Right ventricle myocardium inferior (tissue), 1 donor: ENCODE measurements at regions of chr1 and their contacts with region 1.

Region 1: GRCh38 chr1:67685067-67685557 is at the start of gene GADD45A:
- DNase-seq: peak; percentile 99
- ATAC-seq: peak; percentile 95
- total RNA-seq, gene GADD45A: 53.8 TPM

Region 2: DNA sequence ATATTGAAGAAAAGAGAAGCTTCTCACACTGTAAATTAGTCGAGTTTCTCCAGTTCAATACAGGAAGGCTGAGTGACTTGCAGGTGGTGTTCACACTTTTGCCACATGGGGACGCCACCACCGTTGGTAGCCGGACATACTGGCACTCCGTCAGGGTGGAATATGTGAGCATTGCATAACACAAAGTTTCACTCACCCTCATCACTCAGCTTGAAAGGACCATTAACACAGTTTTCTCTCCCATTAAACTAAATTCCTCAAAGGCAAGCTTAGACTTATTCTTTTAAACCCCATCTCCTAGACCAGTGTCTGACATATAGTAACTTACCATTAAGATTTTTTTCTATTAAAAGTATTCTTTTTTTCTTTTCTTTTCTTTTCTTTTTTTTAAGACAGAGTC is 149.6 kb before region 1 on chr1:
- intact Hi-C with region 1: loop called (anchors 5 kb)
- DNase-seq: peak; percentile 74
- ATAC-seq: peak; percentile 69

Region 3: DNA sequence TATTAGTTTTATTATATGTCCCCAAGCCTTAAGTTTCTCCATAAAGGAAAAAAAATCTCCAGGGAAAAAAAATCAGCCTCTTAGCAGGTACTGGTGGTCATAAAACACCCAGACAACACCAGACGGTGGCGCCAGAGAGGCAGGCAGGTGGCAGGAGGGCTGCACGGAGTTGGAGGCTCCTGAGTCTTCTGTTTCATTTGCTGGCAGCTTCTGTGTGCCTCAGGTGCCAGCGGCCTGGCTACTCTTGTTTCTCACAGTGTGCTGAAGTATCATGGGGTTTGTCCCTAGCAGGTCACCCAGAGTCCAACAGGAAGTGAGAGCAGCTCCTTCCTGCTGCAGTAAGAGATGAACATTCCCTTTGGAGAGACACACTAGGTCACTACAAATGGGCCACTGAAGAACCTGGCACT is 123.4 kb before region 1 on chr1:
- intact Hi-C with region 1: loop called (anchors 1 kb)
- DNase-seq: peak; percentile 94
- ATAC-seq: peak; percentile 93

Region 4: DNA sequence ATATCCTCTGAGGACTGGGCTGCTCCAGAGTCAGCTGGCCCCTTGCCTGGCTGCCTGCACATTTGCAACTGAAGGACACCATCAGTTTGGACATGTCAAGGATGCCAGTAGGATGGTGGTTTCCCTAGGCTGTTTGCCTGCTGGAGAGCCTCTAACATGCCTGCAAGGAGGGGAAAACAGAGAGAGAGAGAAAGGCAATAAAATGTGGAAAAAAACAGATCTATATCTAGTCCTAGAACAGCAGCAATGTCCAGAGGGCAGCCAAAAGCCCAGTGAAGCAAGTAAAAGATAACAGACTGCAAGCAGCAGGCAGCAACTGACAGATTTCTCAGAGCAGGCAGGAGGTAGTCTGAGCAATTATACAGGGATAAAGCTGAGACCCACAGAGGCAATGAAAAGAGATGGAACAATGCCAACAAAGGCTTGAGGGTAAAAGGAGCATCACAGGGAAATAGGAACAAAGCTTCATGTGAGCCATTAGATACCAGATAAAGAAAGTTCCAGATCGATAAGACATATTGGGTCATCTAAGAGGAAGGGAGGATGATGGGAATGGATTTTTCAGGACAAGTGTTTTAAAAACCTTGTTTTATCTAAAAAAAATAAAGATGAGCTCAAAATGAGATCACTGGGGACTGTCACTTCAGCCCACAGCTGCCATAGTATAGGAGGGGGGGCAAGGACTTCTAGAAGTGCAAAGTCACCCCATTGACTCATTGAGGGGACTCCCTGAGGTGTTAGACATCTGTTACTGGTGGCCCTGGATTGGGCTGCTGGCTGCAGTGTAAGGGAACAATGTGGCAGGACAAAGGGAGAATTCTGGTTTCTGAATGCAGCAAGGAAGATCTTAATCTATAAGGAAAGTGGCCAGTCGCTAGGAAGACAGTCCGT is 38.7 kb before region 1 on chr1:
- intact Hi-C with region 1: loop called (anchors 5 kb)
- DNase-seq: peak; percentile 73
- ATAC-seq: peak; percentile 52

Region 5: DNA sequence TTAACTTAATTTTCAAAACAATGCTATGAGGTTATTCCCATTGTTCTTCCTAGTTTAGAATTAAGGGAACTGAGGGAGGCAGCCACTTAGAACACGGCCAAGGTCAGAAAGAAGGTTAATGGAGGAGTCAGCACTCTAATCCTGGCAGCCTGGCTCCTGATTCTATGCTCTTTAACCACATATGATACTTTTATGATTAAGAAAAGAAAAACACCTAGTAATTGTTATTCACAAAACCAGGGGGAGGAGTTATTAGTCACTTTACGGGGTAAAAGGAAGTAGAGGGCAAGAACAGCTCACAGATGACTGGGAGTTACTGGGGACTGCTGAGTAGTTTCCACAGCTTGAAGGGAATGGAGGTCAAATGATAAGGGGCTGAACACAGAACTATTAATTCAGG is 38.5 kb after region 1 on chr1:
- intact Hi-C with region 1: loop called (anchors 5 kb)
- DNase-seq: no peak
- ATAC-seq: no peak

Region 6: GRCh38 chr1:67760030-67760821 is 75.1 kb after region 1 on chr1:
- intact Hi-C with region 1: loop called (anchors 2 kb)
- DNase-seq: no peak
- ATAC-seq: peak; percentile 72

Region 7: DNA sequence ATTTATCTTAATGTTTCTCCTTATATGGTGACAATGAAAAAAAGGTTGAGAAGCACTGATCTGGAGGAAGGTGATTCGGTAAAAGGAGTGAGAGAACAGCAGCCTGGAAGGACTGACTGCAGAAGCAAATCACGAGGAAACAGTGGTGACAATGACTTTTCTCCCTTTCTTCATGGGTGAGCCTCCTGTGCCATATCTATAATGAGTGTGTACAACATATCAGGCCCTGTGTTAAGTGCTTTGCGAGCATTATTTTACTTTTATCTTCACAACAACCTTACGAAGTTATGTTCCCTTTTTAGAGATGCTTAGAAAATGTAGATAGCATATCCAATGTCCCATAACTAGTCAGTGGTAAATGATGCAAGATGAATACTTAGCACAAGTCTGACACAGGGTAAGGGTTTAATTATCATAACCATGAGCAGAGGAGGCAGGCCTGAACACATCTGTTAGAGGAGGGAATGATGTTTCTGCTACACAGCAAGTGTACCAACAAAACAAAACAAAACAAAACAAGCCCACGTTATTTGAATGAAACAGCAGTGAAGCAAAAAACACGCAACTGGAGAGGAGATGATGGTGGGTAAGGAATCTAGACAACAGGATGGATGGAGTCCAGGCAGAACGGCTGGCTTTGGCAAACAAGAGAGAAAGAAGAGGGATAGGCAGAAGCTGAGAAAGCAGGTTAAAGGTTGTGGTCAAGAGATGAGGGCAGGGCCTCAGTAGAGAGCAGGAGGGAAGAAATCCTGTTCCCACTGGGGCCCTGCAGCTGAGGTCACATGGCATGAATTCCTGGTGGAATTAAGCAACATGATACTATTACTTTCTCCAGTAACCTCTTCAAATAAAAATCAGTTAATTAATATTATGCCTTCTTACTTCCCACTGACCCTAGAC is 118.5 kb after region 1 on chr1:
- intact Hi-C with region 1: no loop called
- DNase-seq: no peak
- ATAC-seq: peak; percentile 63

Region 8: DNA sequence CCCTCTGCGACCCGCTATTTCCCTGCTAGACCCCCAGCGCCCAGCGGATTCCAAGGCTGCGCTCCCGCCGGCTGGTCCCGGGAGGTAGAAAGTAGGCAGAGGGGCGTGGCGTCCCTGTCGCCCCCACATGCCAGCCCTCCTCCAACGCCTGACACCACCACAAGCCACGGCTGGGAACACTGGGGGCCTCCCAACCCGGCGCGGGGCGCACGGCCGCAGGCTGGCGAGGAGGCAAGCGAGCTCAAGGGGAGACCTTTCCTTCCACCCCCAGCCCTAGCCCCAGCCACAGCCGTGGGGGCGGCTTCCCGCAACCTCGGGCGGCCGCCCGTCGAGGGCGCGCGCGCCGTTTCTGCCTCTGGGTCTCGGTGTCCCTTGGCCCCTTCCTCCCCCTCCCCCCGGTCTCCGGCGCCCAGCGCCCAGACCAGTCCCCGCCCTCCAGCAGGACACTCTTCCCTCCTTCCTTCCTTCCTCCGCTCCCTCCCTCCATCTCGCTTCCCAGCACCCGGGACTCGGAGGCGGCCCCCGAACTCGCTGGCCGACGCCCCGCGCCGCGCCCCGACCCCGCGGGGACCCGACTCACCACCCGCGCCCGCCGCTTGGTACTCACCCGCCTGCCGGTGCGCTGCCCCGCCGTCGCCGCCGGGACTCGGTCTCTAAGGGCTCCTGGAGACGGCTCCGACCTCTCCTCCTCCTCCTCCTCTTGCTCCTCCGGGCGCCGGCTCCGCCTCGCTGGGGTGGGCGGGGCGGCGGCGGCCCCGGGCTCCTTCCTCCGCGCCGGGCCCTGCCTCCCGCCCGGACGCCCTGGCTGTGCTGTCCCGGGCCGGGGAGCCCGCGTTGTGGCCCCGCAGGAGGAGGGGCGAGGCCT is 147.9 kb after region 1 on chr1 and contains the start of gene GNG12:
- intact Hi-C with region 1: loop called (anchors 10 kb)
- DNase-seq: peak; percentile 78
- ATAC-seq: peak; percentile 90
- total RNA-seq, gene GNG12: 37.2 TPM